ENCODE measurements at regions of chr2 and their contacts with region 1.

Region 1: GRCh38 chr2:16773080-16773713 is 107.6 kb upstream of the CYRIA start:
- DNase-seq: peak; percentile 67
- H3K4me3 ChIP-seq: no peak overlapping the region; a peak in 1 of 4 replicates
- H3K27ac ChIP-seq: no peak overlapping the region
- H3K4me1 ChIP-seq: peaks cover 0 to 5% of the 10 kb centered on the region in 2 experiments; a peak in 2 of 4 replicates
- H3K27me3 ChIP-seq: no peaks in the 10 kb centered on the region
- CTCF ChIP-seq: peak; percentile 74
- EP300 ChIP-seq: peak in 1 of 2 experiments; percentile 38; a peak in 1 of 4 replicates
- RAD21 ChIP-seq: peak; percentile 100

Region 2: DNA sequence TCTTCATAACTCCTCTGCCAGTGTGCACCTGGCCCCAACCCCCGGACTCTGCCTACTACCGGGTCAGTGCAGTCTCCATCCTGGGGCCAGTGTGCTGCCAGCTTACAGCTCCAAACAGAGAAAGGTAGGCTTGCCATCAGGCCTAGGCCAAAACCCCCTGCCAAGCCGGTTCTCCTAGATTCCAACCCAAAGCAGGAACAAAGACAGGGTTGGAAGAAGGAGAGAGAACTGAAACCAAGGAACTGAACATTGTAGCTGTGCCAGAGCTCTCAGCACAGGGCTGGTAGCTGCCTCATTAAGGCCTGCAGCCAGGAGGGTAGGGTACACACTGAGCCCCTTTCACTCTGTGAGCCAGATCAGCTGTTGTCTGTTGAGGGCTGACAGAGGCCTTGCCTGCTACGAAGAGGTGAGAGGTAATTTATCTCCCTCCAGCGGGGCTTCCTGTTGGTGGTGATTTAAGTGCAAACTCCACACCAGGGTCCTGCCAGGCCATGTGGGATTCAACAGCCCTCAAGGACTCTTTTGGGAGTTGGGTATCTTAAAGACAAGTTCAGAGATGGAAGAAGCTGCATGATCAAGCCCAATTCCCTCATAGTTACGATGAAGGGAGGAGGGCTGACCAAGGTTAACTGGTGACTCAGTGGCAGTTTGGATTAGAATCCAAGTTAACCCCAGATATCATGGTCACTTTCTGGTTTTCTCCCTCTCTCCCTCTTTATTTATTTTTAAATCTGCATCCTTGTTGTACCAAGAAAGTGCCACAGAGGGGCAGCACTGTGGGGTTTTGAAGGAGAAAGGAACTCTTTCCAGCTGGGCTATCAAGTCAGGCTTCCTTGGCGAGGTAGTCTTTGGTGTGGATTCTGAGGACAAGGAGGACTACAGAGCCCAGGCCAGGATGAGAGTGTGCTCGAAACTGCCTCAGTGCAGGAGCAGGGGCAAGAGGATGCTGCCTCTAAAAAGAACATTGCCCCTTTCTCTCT is 155.6 kb before region 1 on chr2:
- CTCF ChIA-PET with region 1: interaction called, 27 read pairs
- POLR2A ChIA-PET with region 1: no interaction called
- DNase-seq: peak; percentile 56
- H3K4me3 ChIP-seq: no peak overlapping the region
- H3K27ac ChIP-seq: no peak overlapping the region
- H3K4me1 ChIP-seq: peaks cover 0 to 6% of the 10 kb centered on the region in 2 experiments; a peak in 2 of 4 replicates
- H3K27me3 ChIP-seq: no peaks in the 10 kb centered on the region; the same call in 1 of the 2 replicates
- CTCF ChIP-seq: peak; percentile 59
- EP300 ChIP-seq: no peak
- RAD21 ChIP-seq: peak; percentile 69

Region 3: DNA sequence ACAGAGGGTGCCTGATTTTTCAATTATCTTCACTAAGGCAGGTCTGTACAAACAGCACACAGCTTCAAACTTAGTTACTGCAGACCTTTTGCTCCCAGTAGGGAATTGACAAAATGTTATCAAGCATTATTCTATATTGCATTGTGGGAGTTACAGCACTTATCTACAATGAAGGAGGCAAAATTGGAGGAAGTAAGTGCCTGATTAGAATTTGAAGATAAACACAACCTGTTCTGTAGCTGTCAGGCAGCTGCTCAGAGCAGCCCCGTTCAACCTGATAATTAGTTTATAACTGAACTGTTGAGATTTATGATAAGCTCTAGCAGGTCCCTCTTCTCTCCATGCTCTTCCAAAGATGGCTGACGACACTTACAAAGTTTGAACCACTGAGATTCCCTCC is 256.9 kb after region 1 on chr2:
- CTCF ChIA-PET with region 1: interaction called, 12 read pairs
- POLR2A ChIA-PET with region 1: interaction called, 3 read pairs
- DNase-seq: peak; percentile 64
- H3K4me3 ChIP-seq: no peak overlapping the region
- H3K27ac ChIP-seq: peak overlapping the region in 1 of 2 experiments; percentile 73; a peak in 2 of 4 replicates
- H3K4me1 ChIP-seq: peaks cover 0 to 8% of the 10 kb centered on the region in 2 experiments; a peak in 1 of 4 replicates
- H3K27me3 ChIP-seq: no peaks in the 10 kb centered on the region
- CTCF ChIP-seq: no peak
- EP300 ChIP-seq: peak in 1 of 2 experiments; percentile 100; a peak in 2 of 4 replicates
- RAD21 ChIP-seq: peak; percentile 41; the same call in 1 of the 2 replicates

Region 4: DNA sequence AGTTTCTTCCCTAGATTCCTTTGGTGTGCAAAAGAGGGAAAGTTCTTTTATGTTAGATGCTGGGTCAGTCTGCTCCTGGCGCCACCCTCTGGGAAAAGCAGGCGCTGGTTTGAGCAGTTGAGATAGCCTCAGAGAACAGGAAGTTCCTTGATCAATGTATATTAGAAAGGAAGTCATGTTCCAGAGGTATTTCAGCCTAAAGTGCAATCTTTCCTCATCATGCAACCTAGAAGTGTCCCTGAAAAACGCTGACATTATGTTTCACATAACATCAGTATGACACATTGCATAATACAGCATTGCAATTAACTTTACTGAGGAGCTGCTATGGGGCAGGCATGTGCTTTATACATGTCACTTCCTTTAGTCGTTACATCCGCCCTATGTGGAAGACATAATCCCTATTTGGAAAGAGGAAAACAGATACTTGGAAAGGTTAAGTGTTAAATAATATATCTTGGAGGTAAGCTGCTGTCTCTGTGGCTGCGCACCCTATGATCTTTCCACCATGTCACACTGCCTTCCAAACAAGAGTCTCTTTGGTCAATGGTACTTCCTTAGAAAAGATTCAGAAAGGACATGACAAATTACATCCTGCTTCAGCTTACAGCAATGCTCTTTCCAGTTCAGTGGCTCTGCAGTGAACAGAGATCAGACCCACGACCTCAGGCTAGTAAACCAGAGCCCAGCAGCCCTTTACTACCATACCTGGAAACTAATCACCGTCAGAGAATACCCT is 375.4 kb after region 1 on chr2:
- CTCF ChIA-PET with region 1: interaction called, 84 read pairs
- POLR2A ChIA-PET with region 1: no interaction called
- DNase-seq: peak; percentile 53
- H3K4me3 ChIP-seq: no peak overlapping the region
- H3K27ac ChIP-seq: no peak overlapping the region
- H3K4me1 ChIP-seq: peaks cover 0 to 8% of the 10 kb centered on the region in 2 experiments; a peak in 1 of 4 replicates
- H3K27me3 ChIP-seq: no peaks in the 10 kb centered on the region
- CTCF ChIP-seq: peak; percentile 60
- EP300 ChIP-seq: no peak; a peak in 1 of 4 replicates
- RAD21 ChIP-seq: peak; percentile 79

Region 5: DNA sequence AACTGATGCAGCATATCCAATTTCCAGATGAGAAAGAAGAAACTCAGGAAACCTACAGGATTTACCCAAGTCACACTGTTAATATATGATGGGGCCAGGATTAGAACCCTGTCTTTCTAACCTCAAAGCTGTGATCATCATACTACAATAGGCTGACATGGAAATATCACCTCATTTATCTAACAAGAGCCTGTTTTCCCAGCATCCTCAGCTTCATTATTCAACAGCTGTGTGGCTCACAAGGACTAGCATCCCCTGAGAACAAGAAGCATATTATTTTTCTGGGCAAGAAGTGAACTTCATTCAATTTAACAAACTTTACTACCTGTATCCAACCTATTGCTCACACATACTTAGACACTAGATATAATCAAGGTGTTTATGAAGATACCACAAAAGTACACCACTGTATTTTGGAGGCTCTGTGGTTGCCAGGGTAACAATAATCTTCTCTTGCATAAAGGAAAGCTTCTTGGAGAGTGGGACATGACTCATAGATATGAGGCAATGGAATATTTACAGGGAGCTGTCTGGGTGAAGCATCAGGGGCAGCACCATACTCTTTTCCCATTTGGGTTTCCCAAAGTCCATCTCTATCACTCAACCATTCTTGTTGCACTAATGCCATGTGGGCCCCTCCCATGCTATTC is 526.8 kb after region 1 on chr2:
- CTCF ChIA-PET with region 1: interaction called, 34 read pairs
- POLR2A ChIA-PET with region 1: no interaction called
- DNase-seq: no peak
- H3K4me3 ChIP-seq: no peak overlapping the region
- H3K27ac ChIP-seq: no peak overlapping the region
- H3K4me1 ChIP-seq: peaks cover 0 to 16% of the 10 kb centered on the region in 2 experiments; a peak in 1 of 4 replicates
- H3K27me3 ChIP-seq: no peaks in the 10 kb centered on the region
- CTCF ChIP-seq: no peak
- EP300 ChIP-seq: no peak
- RAD21 ChIP-seq: no peak

Region 6: GRCh38 chr2:17573085-17573803 is 800.0 kb after region 1 on chr2:
- CTCF ChIA-PET with region 1: interaction called, 21 read pairs
- POLR2A ChIA-PET with region 1: no interaction called
- DNase-seq: peak; percentile 36
- H3K4me3 ChIP-seq: no peak overlapping the region
- H3K27ac ChIP-seq: no peak overlapping the region
- H3K4me1 ChIP-seq: no peaks in the 10 kb centered on the region
- H3K27me3 ChIP-seq: no peaks in the 10 kb centered on the region; the same call in 1 of the 2 replicates
- CTCF ChIP-seq: peak; percentile 33
- EP300 ChIP-seq: no peak
- RAD21 ChIP-seq: peak; percentile 70

Region 7: GRCh38 chr2:17672583-17673317 is 899.6 kb after region 1 on chr2:
- CTCF ChIA-PET with region 1: interaction called, 93 read pairs
- POLR2A ChIA-PET with region 1: no interaction called
- DNase-seq: no peak
- H3K4me3 ChIP-seq: no peak overlapping the region
- H3K27ac ChIP-seq: peak overlapping the region in 1 of 2 experiments; percentile 59; a peak in 3 of 4 replicates
- H3K4me1 ChIP-seq: peaks cover 5 to 10% of the 10 kb centered on the region in 2 experiments; a peak in 1 of 4 replicates
- H3K27me3 ChIP-seq: no peaks in the 10 kb centered on the region
- CTCF ChIP-seq: 0 out of 2 replicates have a peak, but pooled peaks have one; percentile 28
- EP300 ChIP-seq: no peak
- RAD21 ChIP-seq: no peak

Measured in SK-N-SH (cell line).